Activated CD4-positive, alpha-beta memory T cell treated with anti-CD3 and anti-CD28 coated beads for 36 hours (primary cell): ENCODE measurements at regions of chr10 and their contacts with region 1.

Region 1: DNA sequence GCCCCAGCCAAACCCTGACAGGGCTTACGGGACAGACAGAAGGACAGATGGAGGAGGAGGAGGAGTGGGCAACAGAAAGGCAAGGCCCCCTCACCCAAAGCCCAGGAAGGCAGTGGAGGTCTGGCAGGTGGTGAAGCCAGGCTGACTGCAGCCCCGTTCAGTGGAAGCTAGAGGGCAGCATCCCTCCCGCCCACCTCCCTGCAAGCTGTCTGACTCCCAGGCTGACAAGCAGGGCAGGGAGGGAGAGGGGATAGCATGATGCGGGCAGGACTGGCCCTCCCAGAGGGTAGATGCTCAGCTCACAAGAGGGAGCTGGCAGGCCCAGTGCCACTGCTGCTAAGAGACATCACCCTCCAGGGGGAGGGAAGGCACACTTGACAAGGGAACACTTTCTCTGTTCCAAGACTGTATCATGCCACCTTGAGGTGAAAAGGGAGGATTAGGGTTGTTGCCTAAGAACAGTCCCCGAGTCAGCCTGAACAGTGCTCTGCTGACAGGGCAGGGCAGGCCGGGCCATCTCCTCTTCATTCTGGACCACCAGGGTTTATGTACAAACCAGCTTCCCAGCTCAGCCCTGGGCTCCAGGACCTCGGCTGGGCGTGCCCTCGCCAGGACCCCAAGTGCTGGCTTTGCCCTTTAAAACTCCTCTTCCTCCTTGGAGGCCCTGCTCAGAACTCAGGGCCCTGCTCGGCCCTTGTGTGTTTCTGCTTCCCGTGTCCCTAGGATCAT is 61.8 kb downstream of the RASGEF1A start:
- DNase-seq: peak; percentile 76
- H3K4me3 Mint-ChIP-seq: no peak overlapping the region
- H3K27ac Mint-ChIP-seq: no peak overlapping the region
- H3K4me1 Mint-ChIP-seq: peaks cover 6% of the 10 kb centered on the region
- H3K27me3 Mint-ChIP-seq: no peaks in the 10 kb centered on the region

Region 2: GRCh38 chr10:43193496-43194080 is 11.5 kb before region 1 on chr10:
- CTCF ChIA-PET with region 1: interaction called, 14 read pairs
- POLR2A ChIA-PET with region 1: no interaction called
- intact Hi-C with region 1: no loop called
- DNase-seq: no peak
- H3K4me3 Mint-ChIP-seq: no peak overlapping the region
- H3K27ac Mint-ChIP-seq: no peak overlapping the region
- H3K4me1 Mint-ChIP-seq: no peaks in the 10 kb centered on the region
- H3K27me3 Mint-ChIP-seq: no peaks in the 10 kb centered on the region

Region 3: DNA sequence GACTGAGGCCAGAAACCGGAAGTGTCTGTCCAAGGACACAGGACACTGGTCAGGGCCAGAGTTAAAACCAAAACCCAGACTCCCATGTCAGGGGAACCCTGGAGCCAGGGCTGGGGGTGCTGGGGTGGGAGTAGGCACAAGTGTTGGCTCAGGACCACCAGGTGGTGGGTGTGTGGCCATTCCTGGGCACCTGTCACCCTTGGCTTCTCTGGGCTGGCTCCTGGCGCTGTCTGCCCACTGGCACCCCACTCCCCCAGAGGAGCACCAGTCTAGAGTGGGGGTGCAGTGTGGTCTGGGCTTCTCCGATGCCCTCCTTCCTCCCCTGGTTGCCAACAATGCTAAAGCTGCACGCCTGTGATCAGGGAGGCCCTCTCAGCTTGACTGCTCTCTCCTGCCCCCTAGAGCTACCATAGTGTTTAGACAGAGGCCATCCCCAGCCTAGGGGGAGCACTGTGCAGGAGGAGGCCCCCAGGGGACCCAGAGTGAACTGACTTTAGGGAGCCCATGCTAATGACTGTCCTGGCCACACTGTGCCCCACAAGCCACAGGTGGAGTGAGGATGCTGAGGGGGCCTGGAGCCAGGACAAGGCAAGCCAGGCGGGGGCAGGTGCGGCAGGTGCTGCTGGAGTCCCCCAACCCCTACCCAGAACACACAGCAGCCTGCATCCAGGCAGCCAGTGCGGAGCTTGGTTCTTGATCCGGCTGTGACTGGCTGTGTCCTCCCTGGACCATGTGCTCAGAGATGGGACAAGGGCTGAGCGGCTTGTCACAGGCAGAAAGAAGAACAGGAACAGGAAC is 50.7 kb after region 1 on chr10:
- CTCF ChIA-PET with region 1: interaction called, 21 read pairs
- POLR2A ChIA-PET with region 1: no interaction called
- intact Hi-C with region 1: loop called (anchors 5 kb)
- DNase-seq: peak; percentile 54
- H3K4me3 Mint-ChIP-seq: no peak overlapping the region
- H3K27ac Mint-ChIP-seq: no peak overlapping the region
- H3K4me1 Mint-ChIP-seq: peaks cover 7% of the 10 kb centered on the region
- H3K27me3 Mint-ChIP-seq: no peaks in the 10 kb centered on the region

Region 4: GRCh38 chr10:43348511-43349312 is 143.6 kb after region 1 on chr10:
- CTCF ChIA-PET with region 1: interaction called, 22 read pairs
- POLR2A ChIA-PET with region 1: no interaction called
- intact Hi-C with region 1: loop called (anchors 1 kb)
- DNase-seq: peak; percentile 92
- H3K4me3 Mint-ChIP-seq: no peak overlapping the region
- H3K27ac Mint-ChIP-seq: no peak overlapping the region
- H3K4me1 Mint-ChIP-seq: peaks cover 16% of the 10 kb centered on the region
- H3K27me3 Mint-ChIP-seq: peaks cover 12% of the 10 kb centered on the region

Region 5: GRCh38 chr10:43372765-43373361 is 167.8 kb after region 1 on chr10:
- CTCF ChIA-PET with region 1: no interaction called
- POLR2A ChIA-PET with region 1: no interaction called
- intact Hi-C with region 1: no loop called
- DNase-seq: no peak
- H3K4me3 Mint-ChIP-seq: no peak overlapping the region
- H3K27ac Mint-ChIP-seq: no peak overlapping the region
- H3K4me1 Mint-ChIP-seq: peaks cover 2% of the 10 kb centered on the region
- H3K27me3 Mint-ChIP-seq: no peaks in the 10 kb centered on the region